GM10248 (cell line): ENCODE measurements at regions of chr6 and their contacts with region 1.

Region 1: DNA sequence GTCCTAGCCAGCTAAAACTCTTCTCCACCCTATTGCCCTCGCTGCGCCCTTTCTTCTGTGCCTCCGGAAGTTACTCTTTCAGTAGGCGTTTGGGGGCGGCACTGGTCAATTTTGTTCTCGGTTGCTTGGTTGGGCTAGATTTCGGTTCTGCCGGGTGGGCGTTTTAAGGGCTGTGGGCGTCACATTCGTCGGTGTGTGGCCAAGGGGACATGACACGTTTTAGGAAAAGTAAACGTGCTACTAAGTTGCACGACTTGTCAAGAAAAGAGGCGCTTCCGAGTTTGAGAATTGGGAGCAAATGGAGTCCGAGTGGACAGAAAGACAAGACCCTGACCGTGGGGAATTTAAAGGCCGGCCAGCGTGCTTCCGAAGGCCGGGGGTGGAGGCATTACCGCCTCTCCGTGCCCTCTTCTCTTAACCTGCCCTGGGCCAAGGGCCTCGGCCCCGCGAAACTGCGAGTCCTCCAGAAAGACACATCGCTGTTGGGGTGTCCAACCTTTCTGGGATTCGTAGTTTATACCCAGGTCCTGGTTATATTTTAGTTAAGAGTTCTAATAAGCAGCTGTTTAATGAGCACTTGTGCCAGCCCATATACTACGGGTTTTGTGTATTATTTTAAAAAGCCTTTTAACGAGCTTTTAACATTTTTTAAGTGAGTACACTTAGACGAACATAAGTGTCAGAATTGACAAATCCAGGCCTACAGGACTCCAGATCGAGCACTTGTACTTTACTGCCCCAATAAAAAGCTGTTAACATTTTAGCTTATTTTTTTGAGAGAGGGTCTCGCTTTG is 661 bp upstream of the BAG6 start:
- DNase-seq: peak; percentile 90
- CTCF ChIP-seq: no peak

Region 2: DNA sequence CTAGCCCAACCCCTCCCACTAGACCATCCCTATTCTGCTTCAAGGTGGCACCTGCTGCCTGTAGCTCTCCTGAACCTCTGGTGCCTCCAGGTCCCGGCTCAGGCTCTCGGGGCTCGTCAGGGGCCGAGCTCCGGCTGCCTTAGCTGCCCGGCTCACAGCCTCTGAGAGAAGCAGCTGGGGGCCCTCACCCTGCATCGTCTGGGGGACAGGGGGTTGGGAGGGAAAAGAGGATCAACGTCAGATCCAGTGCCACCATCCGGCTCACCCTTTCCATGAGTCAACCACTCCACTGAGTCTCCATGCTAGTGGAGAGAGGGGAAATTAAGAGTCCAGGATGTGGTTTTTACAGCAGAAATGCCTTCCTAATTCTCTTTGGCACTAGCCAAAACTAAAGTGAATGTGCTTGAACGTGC is 13.7 kb before region 1 on chr6:
- CTCF ChIA-PET with region 1: interaction called, 11 read pairs
- POLR2A ChIA-PET with region 1: interaction called, 6 read pairs
- DNase-seq: no peak
- CTCF ChIP-seq: no peak

Region 3: DNA sequence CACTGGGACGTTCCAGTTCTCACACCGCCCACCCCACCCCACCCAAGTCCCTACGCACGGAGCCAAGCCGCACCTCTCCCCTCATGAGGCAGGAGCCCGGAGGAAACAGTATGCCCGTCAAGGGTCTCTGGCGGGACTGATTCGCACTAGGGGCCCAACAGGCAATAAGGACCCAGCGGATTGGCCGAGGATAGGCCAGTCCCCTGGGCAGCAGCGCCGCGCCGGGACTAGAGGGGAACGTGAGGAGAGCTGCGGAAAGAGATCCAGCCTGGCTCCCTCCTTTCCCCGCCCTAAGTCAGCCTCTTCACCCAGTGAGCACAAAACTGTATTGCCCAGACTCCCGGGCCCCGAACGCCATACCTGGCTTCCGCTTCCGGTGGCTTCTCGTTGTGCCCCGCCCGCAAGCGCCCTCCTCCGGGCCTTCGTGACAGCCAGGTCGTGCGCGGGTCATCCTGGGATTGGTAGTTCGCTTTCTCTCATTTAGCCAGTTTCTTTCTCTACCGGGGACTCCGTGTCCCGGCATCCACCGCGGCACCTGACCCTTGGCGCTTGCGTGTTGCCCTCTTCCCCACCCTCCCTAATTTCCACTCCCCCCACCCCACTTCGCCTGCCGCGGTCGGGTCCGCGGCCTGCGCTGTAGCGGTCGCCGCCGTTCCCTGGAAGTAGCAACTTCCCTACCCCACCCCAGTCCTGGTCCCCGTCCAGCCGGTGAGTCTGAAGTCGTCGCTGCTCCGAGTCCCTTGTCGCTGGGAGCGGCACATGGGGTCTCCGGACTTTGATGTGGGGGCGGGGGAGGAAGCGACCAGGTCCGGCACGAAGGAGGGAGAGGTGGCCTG is 12.6 kb after region 1 on chr6 and contains the start of gene CSNK2B:
- CTCF ChIA-PET with region 1: interaction called, 27 read pairs
- POLR2A ChIA-PET with region 1: interaction called, 15 read pairs
- DNase-seq: peak; percentile 97
- CTCF ChIP-seq: no peak